ENCODE measurements at regions of chr6 and their contacts with region 1.

Region 1: GRCh38 chr6:170438402-170438753 is 114.7 kb downstream of the PSMB1 start:
- DNase-seq: peak; percentile 86
- H3K4me3 ChIP-seq: peak overlapping the region in 2 of 3 experiments; percentile 3 to 22
- H3K27ac ChIP-seq: peak overlapping the region; percentile 47
- H3K4me1 ChIP-seq: peaks cover 5% of the 10 kb centered on the region
- H3K27me3 ChIP-seq: no peaks in the 10 kb centered on the region
- CTCF ChIP-seq: no peak
- POLR2A ChIP-seq: no peak

Region 2: GRCh38 chr6:169905041-169905807 is 533.2 kb before region 1 on chr6:
- CTCF ChIA-PET with region 1: no interaction called
- POLR2A ChIA-PET with region 1: no interaction called
- dilution Hi-C with region 1: no loop called
- intact Hi-C with region 1: loop called (anchors 1 kb)
- DNase-seq: peak; percentile 99
- H3K4me3 ChIP-seq: no peak overlapping the region
- H3K27ac ChIP-seq: peak overlapping the region; percentile 75
- H3K4me1 ChIP-seq: peaks cover 28% of the 10 kb centered on the region
- H3K27me3 ChIP-seq: no peaks in the 10 kb centered on the region
- CTCF ChIP-seq: no peak
- POLR2A ChIP-seq: peak; percentile 74

Region 3: DNA sequence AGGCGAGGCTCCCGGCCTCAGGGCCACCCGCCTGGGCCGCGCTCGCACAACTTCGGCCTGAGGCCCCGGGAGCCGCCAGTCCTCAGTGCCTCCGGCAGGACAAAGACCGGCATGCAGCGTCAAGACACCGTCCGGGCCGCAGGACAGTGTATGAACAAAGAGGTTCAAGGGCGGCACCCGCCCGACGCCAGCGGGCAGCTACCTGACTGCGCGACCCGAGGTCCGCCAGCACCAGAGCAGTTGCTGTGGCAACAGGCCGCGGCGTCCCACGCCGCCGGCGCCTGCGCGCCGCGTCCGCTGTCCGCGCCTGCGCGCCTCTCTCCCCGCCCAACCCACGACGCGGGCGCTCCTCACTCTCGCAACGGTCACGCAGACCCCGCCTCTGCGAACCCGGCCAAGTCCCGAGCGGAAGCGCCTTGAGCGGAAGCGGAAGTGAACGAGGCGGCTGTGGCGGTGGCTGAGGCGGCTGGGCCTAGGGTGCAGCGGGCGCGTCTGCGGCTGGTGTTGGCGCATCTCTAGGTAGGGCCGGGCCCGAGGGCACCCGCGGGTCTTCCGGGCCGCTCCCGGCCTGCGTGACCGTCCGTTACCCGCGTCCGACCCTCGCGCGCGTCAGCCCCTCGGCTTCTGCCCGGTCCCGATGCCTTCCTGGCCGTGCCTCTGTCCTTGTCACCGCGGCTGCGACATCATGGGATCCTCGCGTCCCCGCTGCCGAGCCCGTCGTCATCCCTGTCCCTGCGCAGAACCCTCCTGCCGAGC is 131.9 kb before region 1 on chr6 and contains the start of gene FAM120B:
- CTCF ChIA-PET with region 1: no interaction called
- POLR2A ChIA-PET with region 1: no interaction called
- dilution Hi-C with region 1: no loop called
- intact Hi-C with region 1: loop called (anchors 1 kb)
- DNase-seq: peak; percentile 96
- H3K4me3 ChIP-seq: peak within 1 kb of the TSS; percentile 48 to 86 (median 78)
- H3K27ac ChIP-seq: peak within 1 kb of the TSS; percentile 73
- H3K4me1 ChIP-seq: peaks cover 11% of the 10 kb centered on the region
- H3K27me3 ChIP-seq: no peaks in the 10 kb centered on the region
- CTCF ChIP-seq: no peak
- POLR2A ChIP-seq: peak; percentile 97
- total RNA-seq, gene FAM120B: 28.1 and 28.2 TPM in 2 replicates

Region 4: GRCh38 chr6:170344631-170345575 is 93.5 kb before region 1 on chr6:
- CTCF ChIA-PET with region 1: no interaction called
- POLR2A ChIA-PET with region 1: no interaction called
- dilution Hi-C with region 1: no loop called
- intact Hi-C with region 1: loop called (anchors 5 kb)
- DNase-seq: peak; percentile 97
- H3K4me3 ChIP-seq: peak overlapping the region in 1 of 3 experiments; percentile 12
- H3K27ac ChIP-seq: peak overlapping the region; percentile 85
- H3K4me1 ChIP-seq: peaks cover 17% of the 10 kb centered on the region
- H3K27me3 ChIP-seq: no peaks in the 10 kb centered on the region
- CTCF ChIP-seq: no peak
- POLR2A ChIP-seq: peak; percentile 50

Region 5: GRCh38 chr6:170405311-170405975 is 32.9 kb before region 1 on chr6:
- CTCF ChIA-PET with region 1: no interaction called
- POLR2A ChIA-PET with region 1: no interaction called
- dilution Hi-C with region 1: no loop called
- intact Hi-C with region 1: loop called (anchors 1 kb)
- DNase-seq: peak; percentile 80
- H3K4me3 ChIP-seq: no peak overlapping the region
- H3K27ac ChIP-seq: peak overlapping the region; percentile 97
- H3K4me1 ChIP-seq: peaks cover 24% of the 10 kb centered on the region
- H3K27me3 ChIP-seq: peaks cover 0 to under 1% of the 10 kb centered on the region in 2 experiments
- CTCF ChIP-seq: no peak
- POLR2A ChIP-seq: no peak

Measured in endothelial cell of umbilical vein (primary cell).